Naive thymus-derived CD4-positive, alpha-beta T cell (primary cell): ENCODE measurements at regions of chr9 and their contacts with region 1.

Region 1: DNA sequence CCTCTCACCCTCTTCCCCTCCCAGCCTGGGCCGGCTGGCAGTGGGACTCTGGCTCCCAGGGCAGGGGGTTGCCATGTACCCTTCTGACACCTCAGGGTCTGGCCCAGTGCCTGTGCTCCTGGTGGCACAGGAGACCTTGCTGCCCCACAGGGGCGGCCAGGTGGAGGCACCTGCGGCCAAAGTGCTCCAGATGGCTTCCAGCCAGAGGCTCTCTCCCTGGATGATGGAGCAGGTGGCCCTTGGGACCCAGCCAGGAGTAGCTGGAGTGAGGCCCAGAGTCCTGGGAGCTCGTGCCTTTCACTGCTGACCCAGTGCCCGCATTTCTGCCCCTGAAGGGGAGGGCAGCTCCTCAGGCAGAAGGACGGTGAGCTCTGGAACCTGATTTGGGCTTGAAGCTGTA is 87.3 kb downstream of the NTNG2 start:
- DNase-seq: no peak
- ATAC-seq: no peak
- H3K4me3 ChIP-seq: no peak overlapping the region
- H3K4me3 Mint-ChIP-seq: no peak overlapping the region
- H3K27ac ChIP-seq: no peak overlapping the region
- H3K27ac Mint-ChIP-seq: no peak overlapping the region
- H3K4me1 ChIP-seq: no peaks in the 10 kb centered on the region
- H3K4me1 Mint-ChIP-seq: peaks cover 0 to 5% (median 0%) of the 10 kb centered on the region in 7 donors
- H3K27me3 ChIP-seq: no peaks in the 10 kb centered on the region
- H3K27me3 Mint-ChIP-seq: peaks cover 0 to 25% (median 0%) of the 10 kb centered on the region in 5 donors

Region 2: DNA sequence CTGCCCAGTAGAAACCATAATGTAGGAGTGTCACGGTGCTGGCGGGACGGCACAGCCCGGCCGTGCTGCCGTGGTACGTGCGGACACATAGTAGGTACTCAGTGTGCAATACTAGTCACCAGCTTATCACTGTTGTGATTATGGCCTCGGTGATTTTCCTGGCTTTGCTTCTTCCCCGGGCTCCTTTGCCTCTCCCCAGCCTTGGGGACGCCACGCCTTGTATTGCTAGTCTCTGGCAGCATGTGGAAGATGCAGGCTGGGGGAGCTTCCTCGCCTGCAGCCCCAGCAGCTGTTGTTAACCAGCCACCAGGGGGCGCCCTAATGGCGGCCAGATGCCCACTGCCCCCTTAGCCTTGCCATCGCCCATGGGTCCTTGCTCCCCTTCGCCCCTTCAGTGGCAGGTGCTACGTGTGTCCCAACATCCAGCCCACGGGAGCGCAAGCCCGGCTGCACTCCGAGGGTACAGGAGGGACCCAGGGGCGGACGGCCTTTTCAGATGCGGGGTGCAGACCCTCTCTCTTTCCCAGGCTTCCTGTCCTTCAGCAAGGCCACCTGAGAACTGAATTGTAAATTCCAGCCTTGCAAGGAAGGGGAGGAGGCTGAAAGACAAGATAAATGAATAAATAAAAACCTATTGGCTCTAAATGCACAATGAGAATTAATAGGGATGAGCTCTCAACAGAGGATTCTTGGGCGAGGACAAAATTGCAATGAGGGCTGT is 79.3 kb before region 1 on chr9:
- CTCF ChIA-PET with region 1: no interaction called
- POLR2A ChIA-PET with region 1: no interaction called
- intact Hi-C with region 1: loop called in 1 of 2 experiments (anchors 1 kb)
- DNase-seq: peak in 8 of 9 donors; percentile 8 to 70 (median 51)
- ATAC-seq: peak; percentile 69
- H3K4me3 ChIP-seq: no peak overlapping the region
- H3K4me3 Mint-ChIP-seq: no peak overlapping the region
- H3K27ac ChIP-seq: no peak overlapping the region
- H3K27ac Mint-ChIP-seq: peak overlapping the region in 1 of 9 donors; percentile 6
- H3K4me1 ChIP-seq: no peaks in the 10 kb centered on the region
- H3K4me1 Mint-ChIP-seq: peaks cover 0 to under 1% (median 0%) of the 10 kb centered on the region in 7 donors
- H3K27me3 ChIP-seq: no peaks in the 10 kb centered on the region
- H3K27me3 Mint-ChIP-seq: peaks cover 25 to 38% (median 33%) of the 10 kb centered on the region in 5 donors

Region 3: DNA sequence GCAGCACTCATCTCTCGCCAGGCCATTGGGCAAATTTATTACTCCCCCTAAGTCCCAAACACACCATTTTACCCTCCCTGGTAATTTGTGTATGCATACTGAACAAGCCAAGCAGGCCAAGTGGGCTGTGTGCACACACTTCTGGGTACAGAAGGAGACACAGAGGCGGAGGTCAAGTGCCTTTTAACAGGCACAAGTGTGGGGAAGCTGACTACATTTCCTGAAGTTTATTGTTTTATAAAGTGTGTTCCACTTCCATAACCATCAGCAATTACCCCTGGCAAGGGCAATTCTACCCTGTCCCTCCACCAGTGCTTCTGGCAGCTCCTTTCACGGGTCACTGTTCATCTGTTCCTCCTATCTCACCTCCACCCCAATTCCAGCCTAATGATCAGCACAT is 11.7 kb after region 1 on chr9:
- CTCF ChIA-PET with region 1: interaction called, 14 read pairs
- POLR2A ChIA-PET with region 1: interaction called, 3 read pairs
- intact Hi-C with region 1: no loop called
- DNase-seq: no peak
- ATAC-seq: no peak
- H3K4me3 ChIP-seq: no peak overlapping the region
- H3K4me3 Mint-ChIP-seq: no peak overlapping the region
- H3K27ac ChIP-seq: no peak overlapping the region
- H3K27ac Mint-ChIP-seq: peak overlapping the region in 2 of 9 donors; percentile 72 to 73
- H3K4me1 ChIP-seq: peaks cover 0 to 8% of the 10 kb centered on the region in 2 donors
- H3K4me1 Mint-ChIP-seq: peaks cover 0 to 13% (median 10%) of the 10 kb centered on the region in 7 donors
- H3K27me3 ChIP-seq: no peaks in the 10 kb centered on the region
- H3K27me3 Mint-ChIP-seq: no peaks in the 10 kb centered on the region

Region 4: GRCh38 chr9:132301521-132301920 is 52.4 kb after region 1 on chr9:
- CTCF ChIA-PET with region 1: no interaction called
- POLR2A ChIA-PET with region 1: no interaction called
- intact Hi-C with region 1: no loop called
- DNase-seq: no peak
- ATAC-seq: no peak
- H3K4me3 ChIP-seq: no peak overlapping the region
- H3K4me3 Mint-ChIP-seq: no peak overlapping the region
- H3K27ac ChIP-seq: no peak overlapping the region
- H3K27ac Mint-ChIP-seq: peak overlapping the region in 1 of 9 donors; percentile 13
- H3K4me1 ChIP-seq: no peaks in the 10 kb centered on the region
- H3K4me1 Mint-ChIP-seq: peaks cover 6 to 33% (median 26%) of the 10 kb centered on the region in 7 donors
- H3K27me3 ChIP-seq: no peaks in the 10 kb centered on the region
- H3K27me3 Mint-ChIP-seq: no peaks in the 10 kb centered on the region